ENCODE measurements at regions of chr11 and their contacts with region 1.

Region 1: DNA sequence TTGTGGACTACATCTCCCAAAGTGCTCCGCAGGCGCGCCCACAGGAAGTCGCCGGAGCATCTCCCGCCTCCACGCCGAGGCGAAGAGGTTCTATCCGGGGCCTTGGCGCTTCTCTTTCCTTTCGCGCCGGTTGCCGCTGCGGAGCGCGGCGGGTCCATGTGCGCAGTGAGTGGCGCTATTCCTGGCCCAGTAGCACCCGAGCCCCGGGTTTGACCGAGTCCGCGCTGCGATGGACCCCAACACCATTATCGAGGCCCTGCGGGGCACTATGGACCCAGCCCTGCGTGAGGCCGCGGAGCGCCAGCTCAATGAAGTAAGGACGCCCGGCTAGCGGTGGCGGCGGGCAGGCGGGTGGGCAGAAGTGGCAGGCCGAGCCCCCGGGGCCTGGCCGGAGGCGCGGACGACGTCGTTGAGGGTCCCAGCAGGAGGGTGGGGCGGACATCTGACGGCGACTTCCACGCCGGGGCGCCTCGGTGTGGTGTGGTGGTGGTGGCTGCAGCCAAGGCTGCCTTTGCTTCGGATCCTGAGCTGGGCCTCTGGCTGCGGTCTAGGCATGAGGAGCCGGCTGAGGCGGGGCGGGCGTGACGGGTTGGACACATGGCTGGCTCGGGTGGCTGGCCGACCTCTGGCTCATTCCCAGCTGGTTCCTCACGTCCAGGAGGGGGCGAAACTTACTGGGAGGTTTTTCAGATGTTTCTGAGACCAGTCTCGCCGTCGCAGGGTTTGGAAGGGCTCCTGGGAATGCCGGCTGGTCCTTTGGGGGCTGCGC is at the start of gene IPO7:
- DNase-seq: peak; percentile 75
- ATAC-seq: peak; percentile 98
- H3K4me3 Mint-ChIP-seq: peak within 1 kb of the TSS; percentile 94
- H3K27ac Mint-ChIP-seq: peak within 1 kb of the TSS; percentile 90
- H3K4me1 Mint-ChIP-seq: peaks cover 36% of the 10 kb centered on the region
- H3K27me3 Mint-ChIP-seq: no peaks in the 10 kb centered on the region
- CTCF ChIP-seq: no peak
- total RNA-seq, gene IPO7: 95.7 and 96.3 TPM in 2 replicates

Region 2: DNA sequence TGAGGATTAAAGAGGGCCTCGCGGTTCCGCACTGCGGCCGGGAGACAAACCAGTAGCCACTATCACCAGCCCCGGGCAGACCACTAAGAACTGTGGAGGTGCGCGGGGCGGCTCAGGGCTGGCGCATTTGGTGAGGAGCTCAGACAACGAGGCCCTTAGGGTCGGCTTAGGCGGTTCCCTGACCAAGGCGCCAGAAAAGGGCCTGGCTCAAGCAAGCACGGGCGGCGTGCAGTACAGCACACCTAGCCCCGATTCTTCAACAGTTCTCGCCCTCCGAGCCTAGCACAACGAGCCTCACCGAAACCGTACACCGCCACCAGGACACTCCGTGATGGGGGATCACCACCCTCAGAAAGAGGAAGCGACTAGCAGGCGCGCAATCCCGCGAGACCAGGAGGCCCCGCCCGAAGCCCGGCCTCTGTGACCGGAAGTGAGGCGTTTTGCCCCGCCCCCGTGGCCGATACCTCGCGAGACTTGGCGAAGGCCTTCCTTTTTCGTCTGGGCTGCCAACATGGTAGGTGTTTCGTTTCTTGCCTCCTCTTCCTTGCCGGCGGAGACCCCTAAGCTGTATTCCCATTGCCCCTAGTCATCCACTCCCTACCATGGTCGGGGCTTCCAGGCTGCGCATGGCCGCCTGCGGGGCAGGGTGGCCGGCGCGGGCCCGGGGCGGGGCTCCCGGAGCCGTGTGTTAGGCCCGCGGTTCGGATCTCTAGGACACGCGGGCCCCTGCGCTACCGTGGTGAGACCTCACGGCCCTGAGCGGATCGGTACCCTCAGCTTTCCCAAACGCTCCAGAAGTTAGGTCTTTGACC is 702.2 kb before region 1 on chr11 and contains the starts of genes RPL27A and TRIM66:
- CTCF ChIA-PET with region 1: no interaction called
- POLR2A ChIA-PET with region 1: interaction called, 3 read pairs
- intact Hi-C with region 1: loop called (anchors 1 kb)
- DNase-seq: peak; percentile 99
- ATAC-seq: peak; percentile 94
- H3K4me3 Mint-ChIP-seq: peak within 1 kb of the TSS; percentile 94
- H3K27ac Mint-ChIP-seq: peak within 1 kb of the TSS; percentile 96
- H3K4me1 Mint-ChIP-seq: peaks cover 45% of the 10 kb centered on the region
- H3K27me3 Mint-ChIP-seq: no peaks in the 10 kb centered on the region
- CTCF ChIP-seq: no peak
- total RNA-seq, gene RPL27A: 1,592 and 2,225 TPM in 2 replicates
- total RNA-seq, gene TRIM66: 12.4 and 13.3 TPM in 2 replicates

Region 3: GRCh38 chr11:9265211-9266131 is 119.2 kb before region 1 on chr11 and contains the start of gene DENND5A:
- CTCF ChIA-PET with region 1: no interaction called
- POLR2A ChIA-PET with region 1: interaction called, 7 read pairs
- intact Hi-C with region 1: loop called (anchors 1 kb)
- DNase-seq: peak; percentile 54
- ATAC-seq: peak; percentile 61
- H3K4me3 Mint-ChIP-seq: peak within 1 kb of the TSS; percentile 94
- H3K27ac Mint-ChIP-seq: peak within 1 kb of the TSS; percentile 93
- H3K4me1 Mint-ChIP-seq: peaks cover 37% of the 10 kb centered on the region
- H3K27me3 Mint-ChIP-seq: no peaks in the 10 kb centered on the region
- CTCF ChIP-seq: no peak
- total RNA-seq, gene DENND5A: 23.2 and 24.4 TPM in 2 replicates

Region 4: DNA sequence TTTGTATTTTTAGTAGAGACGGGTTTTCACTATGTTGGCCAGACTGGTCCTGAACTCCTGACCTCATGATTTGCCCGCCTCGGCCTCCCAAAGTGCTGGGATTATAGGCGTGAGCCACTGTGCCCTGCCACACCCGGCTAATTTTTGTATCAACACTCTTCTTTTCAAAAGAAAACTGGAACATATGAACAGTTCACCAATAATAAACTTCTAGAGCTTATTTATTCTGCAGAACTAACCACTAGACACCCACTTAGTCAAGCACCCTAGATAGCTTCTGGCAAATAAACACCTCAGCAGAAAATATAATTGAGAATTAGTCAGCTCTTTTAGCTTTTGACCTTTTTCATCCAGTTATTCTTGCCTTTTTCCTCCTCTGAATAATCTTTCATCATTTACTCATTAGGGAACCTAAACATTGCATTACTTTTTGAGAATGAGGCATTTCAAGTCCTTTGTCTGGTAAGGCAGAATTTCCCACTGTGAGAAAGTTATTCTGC is 43.0 kb before region 1 on chr11:
- CTCF ChIA-PET with region 1: no interaction called
- POLR2A ChIA-PET with region 1: interaction called, 16 read pairs
- intact Hi-C with region 1: no loop called
- DNase-seq: no peak
- ATAC-seq: no peak
- H3K4me3 Mint-ChIP-seq: no peak overlapping the region
- H3K27ac Mint-ChIP-seq: no peak overlapping the region
- H3K4me1 Mint-ChIP-seq: no peaks in the 10 kb centered on the region
- H3K27me3 Mint-ChIP-seq: peaks cover 2% of the 10 kb centered on the region
- CTCF ChIP-seq: no peak

Region 5: GRCh38 chr11:9397746-9398680 is 13.3 kb after region 1 on chr11:
- CTCF ChIA-PET with region 1: interaction called, 4 read pairs
- POLR2A ChIA-PET with region 1: interaction called, 4 read pairs
- intact Hi-C with region 1: loop called (anchors 2 kb)
- DNase-seq: no peak
- ATAC-seq: peak; percentile 28
- H3K4me3 Mint-ChIP-seq: peak overlapping the region; percentile 21
- H3K27ac Mint-ChIP-seq: no peak overlapping the region
- H3K4me1 Mint-ChIP-seq: peaks cover 48% of the 10 kb centered on the region
- H3K27me3 Mint-ChIP-seq: no peaks in the 10 kb centered on the region
- CTCF ChIP-seq: no peak

Region 6: DNA sequence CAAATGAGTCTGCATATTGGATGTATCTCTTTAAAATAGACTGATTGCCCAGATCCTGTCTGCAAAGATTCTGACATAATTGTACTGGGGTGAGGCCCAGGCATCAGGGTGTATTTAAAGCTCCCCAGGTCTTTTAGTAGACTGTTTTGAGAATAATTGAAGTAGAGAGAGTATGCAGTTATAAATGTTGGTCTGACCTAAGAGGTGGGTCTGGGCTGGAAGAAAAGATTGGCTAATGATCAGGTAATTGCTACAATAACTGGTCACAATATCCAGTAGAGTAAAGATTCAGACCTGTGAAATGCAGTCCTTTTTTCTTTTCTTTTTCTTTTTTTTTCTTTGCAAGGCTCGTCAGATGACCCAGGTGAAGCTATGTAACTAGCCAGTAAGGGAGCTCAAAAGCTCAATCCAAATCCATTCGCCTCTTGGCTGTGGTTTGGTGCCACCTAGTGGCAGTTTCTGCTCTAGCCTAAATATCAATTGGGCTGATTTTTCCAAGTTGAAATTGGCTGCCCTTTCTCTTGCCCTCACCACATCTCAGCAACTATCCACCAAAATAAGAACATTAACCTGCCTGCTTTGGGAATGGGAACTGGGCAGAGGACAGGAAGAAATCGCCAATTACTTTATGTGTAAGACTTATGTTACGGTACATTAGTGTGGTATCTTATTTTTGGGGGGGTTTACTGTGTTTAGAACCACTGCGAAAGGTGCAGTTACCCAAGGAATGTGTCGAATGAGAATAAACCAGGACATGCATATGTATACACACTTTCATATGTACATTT is 122.0 kb after region 1 on chr11:
- CTCF ChIA-PET with region 1: interaction called, 16 read pairs
- POLR2A ChIA-PET with region 1: no interaction called
- intact Hi-C with region 1: no loop called
- DNase-seq: peak; percentile 42
- ATAC-seq: peak; percentile 80
- H3K4me3 Mint-ChIP-seq: no peak overlapping the region
- H3K27ac Mint-ChIP-seq: no peak overlapping the region
- H3K4me1 Mint-ChIP-seq: peaks cover 16% of the 10 kb centered on the region
- H3K27me3 Mint-ChIP-seq: no peaks in the 10 kb centered on the region
- CTCF ChIP-seq: peak; percentile 71

Region 7: DNA sequence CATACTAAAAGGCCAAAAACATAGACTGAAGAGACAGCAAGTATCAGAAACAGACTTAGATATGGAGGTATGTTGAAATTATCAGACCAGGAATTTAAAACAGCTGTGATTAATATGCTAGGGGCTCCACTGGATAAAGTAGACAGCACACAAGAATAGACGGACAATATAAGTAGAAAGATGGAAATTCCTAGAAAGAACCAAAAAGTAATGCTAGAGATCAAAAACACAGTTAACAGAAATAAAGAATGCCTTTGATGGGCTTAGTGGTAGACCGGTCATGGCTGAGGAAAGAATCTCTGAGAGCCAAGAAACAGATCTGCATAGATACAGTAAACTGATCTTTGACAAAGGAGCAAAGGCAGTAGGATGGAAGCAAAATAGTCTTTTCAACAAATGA is 529.3 kb after region 1 on chr11:
- CTCF ChIA-PET with region 1: no interaction called
- POLR2A ChIA-PET with region 1: no interaction called
- intact Hi-C with region 1: no loop called
- DNase-seq: no peak
- ATAC-seq: no peak
- H3K4me3 Mint-ChIP-seq: no peak overlapping the region
- H3K27ac Mint-ChIP-seq: no peak overlapping the region
- H3K4me1 Mint-ChIP-seq: no peaks in the 10 kb centered on the region
- H3K27me3 Mint-ChIP-seq: no peaks in the 10 kb centered on the region
- CTCF ChIP-seq: no peak

Measured in activated B cell treated with CpG ODN at 0.5 μM for 24 hours (primary cell).